CD8-positive, alpha-beta T cell (primary cell): ENCODE measurements at regions of chr9 and their contacts with region 1.

Region 1: GRCh38 chr9:114906908-114907571 is 23.4 kb downstream of the TNFSF8 start:
- DNase-seq: peak in 3 of 9 experiments; percentile 26 to 69 (median 60)
- ATAC-seq: peak; percentile 37
- H3K4me3 ChIP-seq: no peak overlapping the region
- H3K4me3 Mint-ChIP-seq: peak overlapping the region; percentile 23
- H3K27ac ChIP-seq: peak overlapping the region in 1 of 2 experiments; percentile 53
- H3K27ac Mint-ChIP-seq: peak overlapping the region; percentile 95
- H3K4me1 ChIP-seq: peaks cover 69% of the 10 kb centered on the region
- H3K4me1 Mint-ChIP-seq: peaks cover 92% of the 10 kb centered on the region
- H3K27me3 ChIP-seq: no peaks in the 10 kb centered on the region
- H3K27me3 Mint-ChIP-seq: no peaks in the 10 kb centered on the region
- CTCF ChIP-seq: peak; percentile 70

Region 2: DNA sequence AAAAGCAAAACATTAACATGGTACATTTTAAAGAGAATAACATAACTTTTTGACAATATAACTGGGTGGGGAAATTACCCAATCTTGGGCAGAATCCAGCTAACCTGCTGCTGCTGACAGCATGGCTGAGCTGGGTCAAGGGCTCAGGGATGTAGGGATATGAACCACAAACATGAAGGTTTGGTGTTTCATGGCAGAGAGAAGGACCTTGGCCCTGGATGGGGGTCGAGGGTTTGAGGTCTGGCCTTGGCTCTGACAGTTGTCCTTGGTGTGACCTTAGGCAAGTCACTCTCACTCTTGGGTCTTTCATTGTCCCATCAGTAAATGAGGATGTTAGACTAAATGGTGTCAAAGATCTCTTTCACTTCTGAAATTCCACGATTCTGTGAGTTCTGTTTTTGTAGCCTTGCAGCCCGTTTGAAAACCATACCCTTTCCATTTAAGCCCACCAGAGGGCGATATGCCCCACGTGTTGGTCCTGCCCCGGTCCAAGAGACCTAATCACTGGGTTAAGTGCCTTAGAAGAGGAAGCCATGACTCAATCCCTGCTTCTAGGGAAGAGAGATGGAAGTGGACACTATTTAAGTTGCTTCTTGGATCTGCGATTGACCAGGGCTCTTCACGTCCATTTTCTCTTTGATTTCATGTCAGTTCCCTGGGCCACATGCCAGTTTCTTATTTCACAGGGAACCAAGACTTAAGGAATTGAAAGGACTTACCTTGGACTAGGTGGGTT is 168.3 kb before region 1 on chr9:
- CTCF ChIA-PET with region 1: interaction called, 185 read pairs
- POLR2A ChIA-PET with region 1: interaction called, 3 read pairs
- intact Hi-C with region 1: loop called (anchors 1 kb)
- DNase-seq: peak; percentile 51 to 85 (median 74)
- ATAC-seq: peak; percentile 80
- H3K4me3 ChIP-seq: no peak overlapping the region
- H3K4me3 Mint-ChIP-seq: no peak overlapping the region
- H3K27ac ChIP-seq: no peak overlapping the region
- H3K27ac Mint-ChIP-seq: peak overlapping the region; percentile 47
- H3K4me1 ChIP-seq: peaks cover 25% of the 10 kb centered on the region
- H3K4me1 Mint-ChIP-seq: peaks cover 40% of the 10 kb centered on the region
- H3K27me3 ChIP-seq: no peaks in the 10 kb centered on the region
- H3K27me3 Mint-ChIP-seq: no peaks in the 10 kb centered on the region
- CTCF ChIP-seq: peak; percentile 92

Region 3: GRCh38 chr9:114805670-114806525 is 101.1 kb before region 1 on chr9 and contains the start of gene TNFSF15:
- CTCF ChIA-PET with region 1: no interaction called
- POLR2A ChIA-PET with region 1: no interaction called
- intact Hi-C with region 1: loop called in 1 of 2 experiments (anchors 10 kb)
- DNase-seq: peak in 2 of 9 experiments; percentile 6 to 32
- ATAC-seq: no peak
- H3K4me3 ChIP-seq: no peak within 1 kb of the TSS
- H3K4me3 Mint-ChIP-seq: peak within 1 kb of the TSS; percentile 3
- H3K27ac ChIP-seq: no peak within 1 kb of the TSS
- H3K27ac Mint-ChIP-seq: no peak within 1 kb of the TSS
- H3K4me1 ChIP-seq: peaks cover 17% of the 10 kb centered on the region
- H3K4me1 Mint-ChIP-seq: peaks cover 22% of the 10 kb centered on the region
- H3K27me3 ChIP-seq: no peaks in the 10 kb centered on the region
- H3K27me3 Mint-ChIP-seq: no peaks in the 10 kb centered on the region
- CTCF ChIP-seq: no peak
- total RNA-seq, gene TNFSF15: not detected

Region 4: DNA sequence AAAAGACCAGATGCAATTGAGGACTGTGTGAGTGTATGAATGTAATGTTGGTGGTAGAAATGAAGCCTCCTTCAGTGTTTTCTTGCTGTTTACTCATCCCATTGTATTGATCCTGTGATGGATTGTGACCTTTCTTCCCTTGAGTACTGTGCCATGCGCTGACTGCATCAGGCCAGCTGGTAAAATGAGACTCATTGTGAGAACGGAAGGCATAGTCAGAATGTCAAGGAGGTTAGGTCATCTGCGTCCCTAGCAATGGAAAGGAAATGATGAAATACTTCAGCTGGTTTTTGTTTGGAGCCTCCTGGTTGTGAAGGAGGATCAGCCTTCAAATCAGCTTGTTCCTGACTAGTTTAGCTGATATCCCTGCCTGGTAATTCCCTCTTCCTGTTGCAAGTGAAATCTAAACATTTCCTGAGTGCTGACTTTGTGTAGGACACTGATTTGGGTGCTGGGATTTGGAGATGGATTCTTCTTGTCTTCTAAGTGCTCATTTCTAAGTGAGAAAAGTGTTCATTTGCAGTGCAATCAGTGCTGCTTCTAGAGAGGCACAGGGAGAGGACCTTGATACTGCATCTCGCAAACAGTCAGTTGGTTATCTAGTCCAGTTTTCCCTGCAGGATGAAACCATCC is 12.1 kb before region 1 on chr9:
- CTCF ChIA-PET with region 1: interaction called, 20 read pairs
- POLR2A ChIA-PET with region 1: interaction called, 26 read pairs
- intact Hi-C with region 1: loop called in 1 of 2 experiments (anchors 1 kb)
- DNase-seq: no peak
- ATAC-seq: no peak
- H3K4me3 ChIP-seq: no peak overlapping the region
- H3K4me3 Mint-ChIP-seq: peak overlapping the region; percentile 26
- H3K27ac ChIP-seq: peak overlapping the region in 1 of 2 experiments; percentile 1
- H3K27ac Mint-ChIP-seq: peak overlapping the region; percentile 37
- H3K4me1 ChIP-seq: peaks cover 64% of the 10 kb centered on the region
- H3K4me1 Mint-ChIP-seq: peaks cover 49% of the 10 kb centered on the region
- H3K27me3 ChIP-seq: no peaks in the 10 kb centered on the region
- H3K27me3 Mint-ChIP-seq: no peaks in the 10 kb centered on the region
- CTCF ChIP-seq: no peak

Region 5: GRCh38 chr9:114930056-114930812 is 23.2 kb after region 1 on chr9 and contains the start of gene TNFSF8:
- CTCF ChIA-PET with region 1: interaction called, 16 read pairs
- POLR2A ChIA-PET with region 1: interaction called, 13 read pairs
- intact Hi-C with region 1: no loop called
- DNase-seq: peak; percentile 30 to 91 (median 76)
- ATAC-seq: peak; percentile 82
- H3K4me3 ChIP-seq: peak within 1 kb of the TSS; percentile 65 to 81
- H3K4me3 Mint-ChIP-seq: peak within 1 kb of the TSS; percentile 99
- H3K27ac ChIP-seq: peak within 1 kb of the TSS; percentile 74 to 82
- H3K27ac Mint-ChIP-seq: peak within 1 kb of the TSS; percentile 99
- H3K4me1 ChIP-seq: peaks cover 35% of the 10 kb centered on the region
- H3K4me1 Mint-ChIP-seq: peaks cover 56% of the 10 kb centered on the region
- H3K27me3 ChIP-seq: no peaks in the 10 kb centered on the region
- H3K27me3 Mint-ChIP-seq: no peaks in the 10 kb centered on the region
- CTCF ChIP-seq: no peak
- total RNA-seq, gene TNFSF8: 47.7 to 49.3 TPM

Region 6: DNA sequence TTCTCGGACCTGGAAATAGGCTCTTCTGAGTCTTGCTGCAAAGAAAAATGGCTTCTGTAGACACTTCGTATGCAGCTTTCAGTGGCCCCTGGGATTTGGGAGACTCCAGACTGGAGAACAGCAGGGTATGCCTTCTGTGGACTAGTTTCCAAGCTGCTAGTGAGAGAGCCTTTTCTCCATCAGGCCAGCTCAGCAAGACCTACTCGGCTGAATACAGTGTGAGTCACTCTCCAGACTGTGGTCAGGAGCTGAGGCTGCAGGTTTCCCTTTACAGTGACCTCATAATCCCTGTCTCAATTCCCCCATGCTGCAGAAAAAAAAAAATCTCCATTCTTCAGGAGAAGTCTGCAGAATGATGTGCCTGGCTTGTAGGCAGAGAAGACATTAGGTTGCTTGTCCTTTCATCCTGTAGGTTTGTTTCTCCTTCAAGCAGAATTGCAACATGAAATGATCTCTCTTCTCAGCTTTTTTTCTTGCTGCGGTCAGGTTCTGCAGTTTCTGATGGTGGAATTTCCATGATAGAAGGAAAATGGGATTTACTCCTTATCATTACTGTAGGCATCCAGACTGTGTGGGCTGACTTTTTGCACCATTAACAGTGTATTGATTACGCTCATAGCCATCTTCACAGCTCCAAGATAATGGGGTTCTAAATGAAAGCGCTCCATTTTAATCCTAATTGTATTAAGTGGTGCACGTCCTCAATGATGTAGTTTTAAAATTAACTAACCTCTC is 101.7 kb after region 1 on chr9:
- CTCF ChIA-PET with region 1: interaction called, 9 read pairs
- POLR2A ChIA-PET with region 1: no interaction called
- intact Hi-C with region 1: loop called (anchors 1 kb)
- DNase-seq: peak in 1 of 9 experiments; percentile 21
- ATAC-seq: no peak
- H3K4me3 ChIP-seq: no peak overlapping the region
- H3K4me3 Mint-ChIP-seq: no peak overlapping the region
- H3K27ac ChIP-seq: no peak overlapping the region
- H3K27ac Mint-ChIP-seq: no peak overlapping the region
- H3K4me1 ChIP-seq: peaks cover 2% of the 10 kb centered on the region
- H3K4me1 Mint-ChIP-seq: peaks cover 3% of the 10 kb centered on the region
- H3K27me3 ChIP-seq: no peaks in the 10 kb centered on the region
- H3K27me3 Mint-ChIP-seq: no peaks in the 10 kb centered on the region
- CTCF ChIP-seq: no peak